Right lobe of liver (tissue), 6 donors: ENCODE measurements at regions of chr16 and their contacts with region 1.

Region 1: GRCh38 chr16:3490911-3491629 is 4.2 kb downstream of the C16orf90 start:
- DNase-seq: peak in 2 of 3 donors; percentile 65
- ATAC-seq: peak; percentile 51 to 67 (median 60)
- H3K4me3 ChIP-seq: no peak overlapping the region
- H3K27ac ChIP-seq: no peak overlapping the region
- H3K4me1 ChIP-seq: peaks cover 0 to 3% (median 0%) of the 10 kb centered on the region in 4 donors
- H3K27me3 ChIP-seq: no peaks in the 10 kb centered on the region
- CTCF ChIP-seq: peak; percentile 2 to 33 (median 24)
- POLR2A ChIP-seq: no peak

Region 2: DNA sequence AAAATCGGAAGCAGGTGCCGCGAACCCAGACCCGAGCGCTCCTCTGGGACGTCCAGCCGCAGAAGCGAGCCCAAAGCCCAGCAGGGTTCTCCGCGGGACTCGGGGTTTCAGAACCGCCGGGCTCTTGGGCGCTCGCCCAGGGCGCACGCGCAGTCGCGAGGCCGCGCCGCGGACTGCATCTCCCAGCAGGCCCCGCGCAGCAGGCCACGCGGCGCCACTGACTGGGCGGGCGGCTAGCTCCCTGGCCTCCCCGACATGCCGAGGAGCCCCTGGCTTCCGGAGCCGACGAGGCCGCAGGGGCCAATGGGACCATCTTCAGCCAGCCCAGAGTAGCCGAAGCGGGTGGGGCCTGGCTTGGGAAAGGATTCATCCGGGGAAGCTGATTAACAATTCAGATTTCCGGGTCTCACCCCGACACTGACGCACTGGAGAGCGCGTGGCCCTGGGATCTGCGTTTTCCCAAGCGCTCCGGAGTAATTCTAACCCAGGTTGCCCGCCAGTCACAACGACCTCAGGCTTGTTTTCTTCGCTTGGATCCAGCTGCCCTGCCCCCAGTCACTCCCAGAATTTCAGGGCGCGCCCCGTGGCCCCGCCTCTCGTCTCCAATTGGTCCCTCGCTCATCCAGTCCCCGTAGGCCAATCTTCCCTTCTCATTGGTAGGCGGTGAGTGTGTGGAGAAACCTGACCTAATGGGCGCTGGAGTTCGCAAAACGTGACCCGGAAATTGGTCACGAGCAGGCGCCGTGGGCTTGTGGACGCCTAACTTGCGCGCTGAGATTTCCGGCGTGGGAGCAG is 208.1 kb before region 1 on chr16 and contains the start of gene ZNF263:
- intact Hi-C with region 1: loop called in 1 of 2 experiments (anchors 10 kb)
- DNase-seq: peak; percentile 95 to 98 (median 97)
- ATAC-seq: peak; percentile 94 to 97 (median 96)
- H3K4me3 ChIP-seq: peak within 1 kb of the TSS; percentile 73 to 98 (median 90)
- H3K27ac ChIP-seq: peak within 1 kb of the TSS; percentile 98 to 99 (median 98)
- H3K4me1 ChIP-seq: peaks cover 0 to 21% (median 3%) of the 10 kb centered on the region in 4 donors
- H3K27me3 ChIP-seq: no peaks in the 10 kb centered on the region
- CTCF ChIP-seq: no peak
- POLR2A ChIP-seq: peak; percentile 65
- total RNA-seq, gene ZNF263: 7.1 to 13.9 (median 11.0) TPM